ENCODE measurements at regions of chr1 and their contacts with region 1.

Region 1: GRCh38 chr1:203711251-203712007 is 53.6 kb upstream of the LAX1 start:
- DNase-seq: peak in 1 of 4 experiments; percentile 38
- ATAC-seq: peak; percentile 47
- H3K4me3 ChIP-seq: no peak overlapping the region
- H3K27ac ChIP-seq: no peak overlapping the region
- H3K4me1 ChIP-seq: no peaks in the 10 kb centered on the region
- H3K27me3 ChIP-seq: no peaks in the 10 kb centered on the region
- CTCF ChIP-seq: no peak
- EP300 ChIP-seq: no peak
- POLR2A ChIP-seq: no peak
- RAD21 ChIP-seq: no peak

Region 2: GRCh38 chr1:203776636-203777035 is 65.2 kb after region 1 on chr1:
- CTCF ChIA-PET with region 1: no interaction called
- POLR2A ChIA-PET with region 1: no interaction called
- in situ Hi-C with region 1: no loop called
- intact Hi-C with region 1: loop called (anchors 5 kb)
- DNase-seq: peak in 3 of 4 experiments; percentile 38 to 43 (median 39)
- ATAC-seq: peak; percentile 82
- H3K4me3 ChIP-seq: no peak overlapping the region
- H3K27ac ChIP-seq: no peak overlapping the region
- H3K4me1 ChIP-seq: no peaks in the 10 kb centered on the region; a peak in 2 of 5 replicates
- H3K27me3 ChIP-seq: peaks cover 15 to 20% of the 10 kb centered on the region in 2 experiments
- CTCF ChIP-seq: peak; percentile 38 to 61 (median 52); a peak in 4 of 6 replicates
- EP300 ChIP-seq: no peak
- POLR2A ChIP-seq: no peak
- RAD21 ChIP-seq: peak; percentile 61 to 65

Region 3: GRCh38 chr1:203871107-203871875 is 159.9 kb after region 1 on chr1:
- CTCF ChIA-PET with region 1: no interaction called
- POLR2A ChIA-PET with region 1: no interaction called
- in situ Hi-C with region 1: no loop called
- intact Hi-C with region 1: no loop called
- DNase-seq: peak; percentile 56 to 71 (median 68)
- ATAC-seq: peak; percentile 91
- H3K4me3 ChIP-seq: no peak overlapping the region
- H3K27ac ChIP-seq: no peak overlapping the region
- H3K4me1 ChIP-seq: no peaks in the 10 kb centered on the region
- H3K27me3 ChIP-seq: no peaks in the 10 kb centered on the region
- CTCF ChIP-seq: peak; percentile 88 to 99 (median 99)
- EP300 ChIP-seq: no peak
- POLR2A ChIP-seq: 0 out of 2 replicates have a peak, but pooled peaks have one; percentile 37
- RAD21 ChIP-seq: peak; percentile 95 to 97

Region 4: GRCh38 chr1:203968728-203969127 is 257.3 kb after region 1 on chr1:
- CTCF ChIA-PET with region 1: no interaction called
- POLR2A ChIA-PET with region 1: no interaction called
- in situ Hi-C with region 1: no loop called
- intact Hi-C with region 1: no loop called
- DNase-seq: no peak
- ATAC-seq: no peak
- H3K4me3 ChIP-seq: no peak overlapping the region
- H3K27ac ChIP-seq: no peak overlapping the region
- H3K4me1 ChIP-seq: no peaks in the 10 kb centered on the region
- H3K27me3 ChIP-seq: peaks cover 0 to 5% of the 10 kb centered on the region in 2 experiments; a peak in 2 of 5 replicates
- CTCF ChIP-seq: no peak
- EP300 ChIP-seq: no peak
- POLR2A ChIP-seq: no peak
- RAD21 ChIP-seq: no peak